CD4-positive, alpha-beta memory T cell (primary cell): ENCODE measurements at regions of chr2 and their contacts with region 1.

Region 1: GRCh38 chr2:156435715-156436496 is at the start of gene GPD2:
- DNase-seq: peak; percentile 58 to 68 (median 62)
- H3K4me3 ChIP-seq: peak within 1 kb of the TSS; percentile 20 to 66
- H3K4me3 Mint-ChIP-seq: peak within 1 kb of the TSS; percentile 93 to 99 (median 98)
- H3K27ac ChIP-seq: peak within 1 kb of the TSS; percentile 65
- H3K27ac Mint-ChIP-seq: peak within 1 kb of the TSS; percentile 93 to 98 (median 97)
- H3K4me1 ChIP-seq: peaks cover 22% of the 10 kb centered on the region
- H3K4me1 Mint-ChIP-seq: peaks cover 23 to 46% (median 31%) of the 10 kb centered on the region in 4 donors
- H3K27me3 ChIP-seq: no peaks in the 10 kb centered on the region
- H3K27me3 Mint-ChIP-seq: no peaks in the 10 kb centered on the region
- total RNA-seq, gene GPD2: 12.2 to 13.1 TPM

Region 2: GRCh38 chr2:156341452-156342253 is 94.3 kb before region 1 on chr2:
- CTCF ChIA-PET with region 1: interaction called, 4 read pairs
- POLR2A ChIA-PET with region 1: interaction called, 26 read pairs
- intact Hi-C with region 1: no loop called
- DNase-seq: peak; percentile 86 to 94 (median 87)
- H3K4me3 ChIP-seq: peak overlapping the region; percentile 66 to 91
- H3K4me3 Mint-ChIP-seq: peak overlapping the region; percentile 90 to 99 (median 96)
- H3K27ac ChIP-seq: peak overlapping the region; percentile 99
- H3K27ac Mint-ChIP-seq: peak overlapping the region; percentile 95 to 100 (median 99)
- H3K4me1 ChIP-seq: peaks cover 37% of the 10 kb centered on the region
- H3K4me1 Mint-ChIP-seq: peaks cover 21 to 48% (median 33%) of the 10 kb centered on the region in 4 donors
- H3K27me3 ChIP-seq: no peaks in the 10 kb centered on the region
- H3K27me3 Mint-ChIP-seq: peaks cover 0 to 2% of the 10 kb centered on the region in 2 donors

Region 3: DNA sequence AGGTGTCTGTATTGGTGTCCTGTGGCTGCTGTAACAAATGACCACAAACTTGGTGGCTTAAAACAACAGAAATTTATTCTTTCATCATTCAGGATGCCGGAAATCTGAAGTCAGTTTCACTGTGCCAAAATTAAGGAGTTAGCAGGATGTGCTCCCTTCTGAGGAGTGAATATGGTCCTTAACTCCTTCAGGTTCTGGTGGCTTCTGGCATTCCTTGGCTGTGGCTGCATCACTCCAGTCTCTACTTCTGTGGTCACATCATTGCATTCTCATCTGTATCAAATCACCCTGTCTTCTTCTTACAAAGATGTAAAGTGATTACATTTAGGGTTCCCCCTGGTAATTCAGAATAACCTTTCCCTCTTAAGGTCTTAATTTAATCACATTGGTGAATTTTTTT is 12.9 kb after region 1 on chr2:
- CTCF ChIA-PET with region 1: no interaction called
- POLR2A ChIA-PET with region 1: no interaction called
- intact Hi-C with region 1: no loop called
- DNase-seq: no peak
- H3K4me3 ChIP-seq: no peak overlapping the region
- H3K4me3 Mint-ChIP-seq: no peak overlapping the region
- H3K27ac ChIP-seq: no peak overlapping the region
- H3K27ac Mint-ChIP-seq: no peak overlapping the region
- H3K4me1 ChIP-seq: no peaks in the 10 kb centered on the region
- H3K4me1 Mint-ChIP-seq: peaks cover 10 to 20% (median 17%) of the 10 kb centered on the region in 4 donors
- H3K27me3 ChIP-seq: no peaks in the 10 kb centered on the region
- H3K27me3 Mint-ChIP-seq: no peaks in the 10 kb centered on the region